ENCODE measurements at regions of chr1 and their contacts with region 1.

Region 1: DNA sequence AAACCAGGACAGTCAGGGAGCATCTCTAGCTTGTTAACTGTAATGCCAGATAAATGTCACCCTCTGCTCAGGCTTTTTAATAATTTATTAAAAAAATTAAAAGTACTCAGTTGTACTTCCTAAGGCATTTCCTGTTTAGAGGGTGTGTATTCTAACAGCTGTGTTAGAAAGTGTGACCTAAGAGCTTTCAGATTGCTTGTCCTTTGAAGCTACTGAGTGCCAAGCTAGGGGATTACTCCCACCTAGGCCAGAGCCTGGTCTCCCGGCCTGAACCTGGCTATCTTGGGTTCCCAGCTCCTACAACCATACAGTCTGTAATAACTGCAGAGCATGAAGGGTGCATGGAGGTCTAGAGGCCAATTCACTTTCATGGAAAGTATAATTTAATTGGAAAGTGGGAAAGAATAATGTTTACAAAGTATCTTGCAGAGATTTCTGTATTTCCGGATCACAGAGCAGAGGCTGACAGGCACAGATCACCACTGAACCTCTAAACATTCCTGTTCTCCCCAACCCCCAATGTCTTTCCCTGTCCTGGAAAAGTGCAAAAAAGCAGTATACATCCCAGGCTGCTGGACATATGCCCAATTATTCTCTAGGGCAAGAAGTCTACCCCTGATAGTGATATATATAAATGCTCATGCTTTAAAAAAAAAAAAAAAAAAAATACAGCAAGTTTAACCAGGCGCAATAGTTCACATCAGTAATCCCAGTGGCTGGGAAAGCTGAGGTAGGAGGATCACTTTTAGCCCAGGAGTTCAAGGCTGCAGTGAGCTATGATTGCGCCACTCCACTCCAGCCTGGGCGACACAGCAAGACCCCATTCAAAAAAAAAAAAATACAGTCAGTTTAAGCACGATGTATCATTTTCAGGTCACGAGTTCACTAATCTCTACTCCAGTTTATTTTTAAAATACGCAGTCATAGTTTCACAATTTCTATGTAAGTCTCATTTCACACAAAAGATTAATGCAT is 36.7 kb upstream of the RAP1A start:
- DNase-seq: no peak
- ATAC-seq: no peak
- H3K4me3 Mint-ChIP-seq: no peak overlapping the region
- H3K27ac Mint-ChIP-seq: no peak overlapping the region
- H3K4me1 Mint-ChIP-seq: no peaks in the 10 kb centered on the region
- H3K27me3 Mint-ChIP-seq: no peaks in the 10 kb centered on the region

Region 2: DNA sequence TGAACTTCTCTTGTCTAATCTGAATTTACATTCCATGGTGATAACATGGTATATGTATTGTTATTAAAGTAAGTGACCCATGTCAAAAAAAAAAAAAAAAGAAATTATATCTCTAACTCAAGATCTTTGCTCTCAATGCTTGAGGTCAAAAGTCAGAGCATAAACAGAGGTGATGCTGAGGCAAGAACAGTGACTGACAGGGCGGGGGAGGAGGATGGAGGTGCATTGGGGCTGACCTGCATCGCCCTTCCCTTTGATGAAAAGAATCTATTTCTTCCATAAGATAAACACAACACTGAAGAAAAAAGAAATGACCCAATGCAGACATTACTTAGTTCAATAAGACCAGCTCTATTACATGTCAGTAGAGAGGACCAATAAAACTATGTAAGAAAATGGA is 201.5 kb before region 1 on chr1:
- CTCF ChIA-PET with region 1: no interaction called
- POLR2A ChIA-PET with region 1: no interaction called
- DNase-seq: no peak
- ATAC-seq: no peak
- H3K4me3 Mint-ChIP-seq: no peak overlapping the region
- H3K27ac Mint-ChIP-seq: no peak overlapping the region
- H3K4me1 Mint-ChIP-seq: no peaks in the 10 kb centered on the region
- H3K27me3 Mint-ChIP-seq: peaks cover 27% of the 10 kb centered on the region

Region 3: GRCh38 chr1:111570781-111571181 is 12.2 kb before region 1 on chr1:
- CTCF ChIA-PET with region 1: interaction called, 11 read pairs
- POLR2A ChIA-PET with region 1: no interaction called
- DNase-seq: peak; percentile 50
- ATAC-seq: no peak
- H3K4me3 Mint-ChIP-seq: no peak overlapping the region
- H3K27ac Mint-ChIP-seq: no peak overlapping the region
- H3K4me1 Mint-ChIP-seq: peaks cover 19% of the 10 kb centered on the region
- H3K27me3 Mint-ChIP-seq: no peaks in the 10 kb centered on the region

Measured in activated CD8-positive, alpha-beta T cell treated with anti-CD3 and anti-CD28 coated beads, Interleukin-2, amount 10 ng/mL, durations not matched to agents 7 days and 5 days (primary cell).